PC-9 (cell line): ENCODE measurements at regions of chr1 and their contacts with region 1.

Region 1: DNA sequence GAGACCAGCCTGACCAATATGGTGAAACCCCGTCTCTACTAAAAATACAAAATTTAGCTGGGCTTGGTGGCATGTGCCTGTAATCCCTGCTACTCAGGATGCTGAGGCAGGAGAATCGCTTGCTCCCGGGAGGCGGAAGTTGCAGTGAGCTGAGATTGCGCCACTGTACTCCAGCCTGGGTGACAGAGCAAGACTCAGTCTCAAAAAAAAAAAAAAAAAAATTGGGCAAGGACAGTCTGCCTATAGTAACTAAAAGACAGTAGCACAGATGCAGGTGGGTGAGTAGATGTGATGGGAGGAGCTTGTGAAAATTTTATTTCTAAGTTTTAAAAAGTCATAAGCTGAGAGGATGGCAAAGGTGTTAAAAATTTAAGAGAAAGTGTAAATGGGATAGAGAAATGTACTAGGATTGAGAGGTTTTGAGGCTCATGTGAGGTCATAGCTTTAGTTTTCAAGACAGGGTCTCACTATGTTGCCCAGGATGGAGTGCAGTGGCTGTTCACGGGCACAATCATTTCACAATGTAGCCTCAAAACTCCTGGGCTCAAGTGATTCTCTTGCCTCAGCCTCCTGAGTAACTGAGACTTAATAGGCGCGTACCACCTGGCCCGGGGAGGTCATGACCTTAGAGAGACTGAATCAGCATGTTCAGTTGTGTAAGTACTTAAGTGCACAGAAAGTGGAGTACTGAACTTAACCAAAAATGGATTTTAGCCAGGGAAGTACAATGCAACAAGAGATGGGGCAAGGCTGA is 33.7 kb downstream of the PTP4A2 start:
- DNase-seq: peak in 1 of 2 experiments; percentile 54
- H3K4me3 ChIP-seq: no peak overlapping the region
- H3K27ac ChIP-seq: peak overlapping the region; percentile 9; the same call in 1 of the 2 replicates
- H3K4me1 ChIP-seq: no peaks in the 10 kb centered on the region
- H3K27me3 ChIP-seq: no peaks in the 10 kb centered on the region
- CTCF ChIP-seq: no peak

Region 2: GRCh38 chr1:31855038-31855845 is 49.3 kb before region 1 on chr1:
- CTCF ChIA-PET with region 1: no interaction called
- POLR2A ChIA-PET with region 1: no interaction called
- intact Hi-C with region 1: no loop called
- DNase-seq: peak; percentile 2 to 80
- H3K4me3 ChIP-seq: no peak overlapping the region
- H3K27ac ChIP-seq: peak overlapping the region; percentile 3; the same call in 1 of the 2 replicates
- H3K4me1 ChIP-seq: peaks cover 13% of the 10 kb centered on the region
- H3K27me3 ChIP-seq: no peaks in the 10 kb centered on the region
- CTCF ChIP-seq: no peak

Region 3: DNA sequence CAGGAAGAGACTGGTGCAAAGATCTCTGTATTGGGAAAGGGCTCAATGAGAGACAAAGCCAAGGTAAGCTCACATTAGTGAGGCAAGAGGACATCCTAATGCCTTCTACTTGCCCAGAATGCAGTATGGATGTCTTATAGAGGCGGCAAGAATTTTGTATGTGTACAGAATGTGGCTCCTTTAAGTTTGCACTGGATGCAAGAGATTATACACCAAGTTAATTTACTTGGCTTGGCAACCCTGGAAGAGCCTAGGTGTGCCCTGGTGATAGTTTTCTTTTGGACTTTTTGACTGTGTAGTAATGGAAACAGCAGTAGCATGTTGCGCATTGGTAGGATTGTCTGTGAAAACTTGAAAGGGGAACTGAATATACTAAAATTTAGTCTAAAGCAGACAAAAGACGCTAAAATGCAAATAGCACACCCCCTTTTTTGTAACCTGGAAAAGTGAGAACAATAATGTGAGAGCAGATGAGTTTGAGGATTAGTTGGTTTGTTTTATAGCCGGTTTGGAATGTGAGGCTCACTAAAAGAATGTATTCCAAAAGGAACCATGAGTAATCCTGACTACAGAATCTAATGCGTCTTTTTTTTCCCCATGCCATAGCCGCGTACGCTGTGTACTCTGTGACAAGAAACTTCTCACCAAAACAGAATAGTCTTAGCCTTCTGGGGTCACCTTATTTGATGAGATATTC is 127.2 kb after region 1 on chr1:
- CTCF ChIA-PET with region 1: no interaction called
- POLR2A ChIA-PET with region 1: interaction called, 16 read pairs
- intact Hi-C with region 1: no loop called
- DNase-seq: peak in 1 of 2 experiments; percentile 17
- H3K4me3 ChIP-seq: no peak overlapping the region
- H3K27ac ChIP-seq: no peak overlapping the region
- H3K4me1 ChIP-seq: no peaks in the 10 kb centered on the region
- H3K27me3 ChIP-seq: no peaks in the 10 kb centered on the region
- CTCF ChIP-seq: no peak